Spleen (tissue), 13 donors: ENCODE measurements at regions of chr4 and their contacts with region 1.

Region 1: DNA sequence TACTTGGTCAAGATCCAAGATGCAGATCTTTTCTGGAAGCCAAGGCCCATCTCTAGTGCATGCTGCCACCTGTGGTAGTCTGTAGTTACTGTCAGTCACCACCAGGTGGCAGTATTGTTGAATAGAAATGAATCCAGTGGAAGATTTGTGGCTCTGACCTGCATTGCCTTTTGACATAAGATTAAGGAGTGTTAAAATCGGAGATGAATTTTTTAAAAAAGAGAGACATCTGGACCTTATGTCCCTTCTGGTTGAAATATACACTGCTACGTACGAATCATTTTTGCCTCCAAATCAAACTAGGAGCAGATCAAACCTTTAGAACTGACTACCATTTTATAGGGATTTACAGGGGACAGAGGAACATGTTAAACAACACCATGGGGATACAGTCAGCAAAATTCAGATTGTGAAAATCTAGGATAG is 46.9 kb upstream of the RHOH start:
- DNase-seq: no peak
- H3K4me3 ChIP-seq: no peak overlapping the region
- H3K27ac ChIP-seq: peak overlapping the region in 3 of 8 donors; percentile 8 to 40 (median 28)
- H3K4me1 ChIP-seq: peaks cover 3 to 54% (median 12%) of the 10 kb centered on the region in 6 donors
- H3K27me3 ChIP-seq: no peaks in the 10 kb centered on the region
- CTCF ChIP-seq: peak; percentile 85 to 97 (median 94)
- POLR2A ChIP-seq: no peak

Region 2: DNA sequence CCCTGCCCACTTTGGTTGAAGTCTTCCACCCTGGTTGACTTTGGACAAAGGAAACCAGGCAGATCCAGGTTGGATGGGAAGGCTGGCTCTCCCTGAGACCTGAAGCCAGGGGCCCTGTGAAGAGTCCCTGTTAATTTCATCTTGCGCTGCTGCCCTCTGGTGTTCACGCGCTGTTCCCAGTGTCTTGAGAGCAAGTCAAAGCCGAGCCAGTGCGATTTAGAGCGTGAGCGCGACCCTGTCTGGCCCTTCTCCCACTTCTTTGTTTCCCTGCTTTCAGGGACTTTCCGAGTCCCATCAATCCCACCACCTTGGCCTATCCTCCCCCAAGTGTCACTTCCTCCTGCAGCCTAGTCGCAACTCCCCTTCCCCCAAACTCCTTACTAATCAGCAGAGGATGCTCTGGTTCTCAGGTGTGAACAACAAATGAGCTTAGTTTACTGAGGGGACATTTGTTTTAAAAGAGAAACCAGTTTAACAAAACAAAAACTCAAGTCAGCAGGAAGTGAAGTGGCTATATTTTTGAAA is 159.3 kb after region 1 on chr4:
- intact Hi-C with region 1: loop called (anchors 5 kb)
- DNase-seq: peak; percentile 96
- H3K4me3 ChIP-seq: peak overlapping the region in 2 of 8 donors; percentile 10 to 52
- H3K27ac ChIP-seq: peak overlapping the region; percentile 66 to 92 (median 84)
- H3K4me1 ChIP-seq: peaks cover 27 to 82% (median 66%) of the 10 kb centered on the region in 6 donors
- H3K27me3 ChIP-seq: no peaks in the 10 kb centered on the region
- CTCF ChIP-seq: peak; percentile 86 to 95 (median 90)
- POLR2A ChIP-seq: no peak

Region 3: GRCh38 chr4:40369437-40370274 is 219.7 kb after region 1 on chr4:
- intact Hi-C with region 1: no loop called
- DNase-seq: no peak
- H3K4me3 ChIP-seq: no peak overlapping the region
- H3K27ac ChIP-seq: no peak overlapping the region
- H3K4me1 ChIP-seq: no peaks in the 10 kb centered on the region
- H3K27me3 ChIP-seq: no peaks in the 10 kb centered on the region
- CTCF ChIP-seq: no peak
- POLR2A ChIP-seq: no peak